ENCODE measurements at regions of chr21 and their contacts with region 1.

Region 1: DNA sequence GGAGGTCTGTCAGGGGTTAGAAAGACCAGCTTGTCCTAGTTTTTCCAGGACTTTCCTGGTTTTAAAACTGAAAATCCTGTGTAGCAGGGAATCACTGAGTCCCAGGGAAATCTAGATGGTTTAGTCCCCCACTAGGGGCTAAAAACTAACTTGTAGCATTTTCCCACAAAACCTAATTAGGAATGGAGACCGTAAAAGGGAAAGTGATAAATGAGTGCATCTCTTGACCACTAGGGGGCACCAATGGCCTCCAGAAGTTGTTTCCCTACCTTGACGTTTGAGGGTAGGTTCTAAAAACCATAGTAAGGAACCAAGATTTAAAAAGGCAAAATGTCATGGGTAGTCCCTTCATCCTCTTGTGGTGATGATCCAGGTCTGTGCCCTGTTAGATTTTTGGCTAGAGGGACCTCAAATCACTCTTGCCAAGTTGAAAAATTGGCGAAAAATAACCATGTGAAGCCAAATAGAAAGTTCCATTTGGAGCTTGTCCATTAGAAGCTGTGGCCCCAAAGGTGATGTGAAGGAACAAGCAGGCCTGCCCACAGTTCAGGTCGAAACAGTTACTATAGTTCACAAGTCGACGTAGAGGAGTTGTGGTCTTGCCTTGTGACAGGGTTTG is 24.5 kb downstream of the CLIC6 start:
- DNase-seq: peak; percentile 39
- H3K4me3 ChIP-seq: no peak overlapping the region
- H3K27ac ChIP-seq: no peak overlapping the region
- H3K4me1 ChIP-seq: peaks cover 6% of the 10 kb centered on the region
- H3K27me3 ChIP-seq: no peaks in the 10 kb centered on the region
- CTCF ChIP-seq: peak; percentile 83 to 92

Region 2: GRCh38 chr21:34812504-34813265 is 119.4 kb after region 1 on chr21:
- CTCF ChIA-PET with region 1: no interaction called
- dilution Hi-C with region 1: no loop called
- in situ Hi-C with region 1: no loop called
- intact Hi-C with region 1: loop called (anchors 5 kb)
- DNase-seq: peak; percentile 81
- H3K4me3 ChIP-seq: no peak overlapping the region
- H3K27ac ChIP-seq: peak overlapping the region; percentile 94
- H3K4me1 ChIP-seq: peaks cover 98% of the 10 kb centered on the region
- H3K27me3 ChIP-seq: no peaks in the 10 kb centered on the region
- CTCF ChIP-seq: no peak

Region 3: DNA sequence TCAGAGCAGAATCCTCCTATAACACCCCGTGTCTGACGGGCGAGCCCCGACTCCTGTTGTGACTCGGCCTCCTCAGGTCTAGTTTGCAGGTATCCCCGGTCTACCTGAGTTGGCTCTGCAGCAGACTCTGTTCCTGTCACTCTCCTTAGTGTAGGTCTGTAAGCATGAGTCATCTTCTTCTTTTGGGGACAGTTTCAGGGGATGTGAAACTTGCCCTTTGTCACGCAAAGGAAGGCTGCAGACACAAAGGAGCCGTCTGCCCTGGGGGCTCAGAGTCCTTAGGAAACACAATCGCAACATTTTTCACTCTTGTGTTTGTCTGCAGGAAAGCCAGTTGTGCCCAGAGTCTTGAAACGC is 172.6 kb after region 1 on chr21:
- CTCF ChIA-PET with region 1: no interaction called
- dilution Hi-C with region 1: no loop called
- in situ Hi-C with region 1: no loop called
- intact Hi-C with region 1: loop called (anchors 5 kb)
- DNase-seq: no peak
- H3K4me3 ChIP-seq: no peak overlapping the region
- H3K27ac ChIP-seq: peak overlapping the region; percentile 3
- H3K4me1 ChIP-seq: peaks cover 55% of the 10 kb centered on the region
- H3K27me3 ChIP-seq: no peaks in the 10 kb centered on the region
- CTCF ChIP-seq: no peak

Region 4: GRCh38 chr21:35940074-35940927 is 1247.0 kb after region 1 on chr21:
- CTCF ChIA-PET with region 1: no interaction called
- dilution Hi-C with region 1: no loop called
- in situ Hi-C with region 1: no loop called
- intact Hi-C with region 1: loop called (anchors 2 kb)
- DNase-seq: peak; percentile 66
- H3K4me3 ChIP-seq: no peak overlapping the region
- H3K27ac ChIP-seq: no peak overlapping the region
- H3K4me1 ChIP-seq: no peaks in the 10 kb centered on the region
- H3K27me3 ChIP-seq: no peaks in the 10 kb centered on the region
- CTCF ChIP-seq: peak; percentile 77

Region 5: GRCh38 chr21:36113647-36114428 is 1420.5 kb after region 1 on chr21:
- CTCF ChIA-PET with region 1: no interaction called
- dilution Hi-C with region 1: no loop called
- in situ Hi-C with region 1: no loop called
- intact Hi-C with region 1: loop called (anchors 5 kb)
- DNase-seq: no peak
- H3K4me3 ChIP-seq: no peak overlapping the region
- H3K27ac ChIP-seq: no peak overlapping the region
- H3K4me1 ChIP-seq: no peaks in the 10 kb centered on the region
- H3K27me3 ChIP-seq: no peaks in the 10 kb centered on the region
- CTCF ChIP-seq: no peak

Measured in mammary epithelial cell (primary cell).